ENCODE measurements at regions of chr16 and their contacts with region 1.

Region 1: DNA sequence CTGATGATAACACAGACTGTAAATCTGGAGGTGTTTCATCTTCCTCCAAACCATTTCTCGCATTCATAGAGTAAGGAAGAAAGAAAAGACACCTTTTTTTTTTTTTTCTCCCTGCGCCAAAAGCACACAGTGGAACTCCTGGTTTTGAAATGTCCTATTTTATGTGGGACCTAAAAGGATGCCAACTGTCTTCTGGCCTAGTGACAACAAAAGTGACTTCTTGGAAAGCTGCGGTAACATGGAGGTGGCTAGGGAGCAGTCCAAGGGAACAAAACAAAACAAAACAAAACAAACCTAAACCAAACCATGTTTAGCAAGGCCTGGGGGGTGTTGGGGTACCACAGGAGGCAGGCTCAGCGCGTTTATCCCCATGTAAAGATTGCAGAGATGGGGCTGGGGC is 174.8 kb downstream of the XYLT1 start:
- DNase-seq: no peak
- CTCF ChIP-seq: no peak

Region 2: GRCh38 chr16:17211797-17212196 is 84.2 kb before region 1 on chr16:
- CTCF ChIA-PET with region 1: no interaction called
- POLR2A ChIA-PET with region 1: no interaction called
- DNase-seq: no peak
- CTCF ChIP-seq: peak; percentile 37

Region 3: DNA sequence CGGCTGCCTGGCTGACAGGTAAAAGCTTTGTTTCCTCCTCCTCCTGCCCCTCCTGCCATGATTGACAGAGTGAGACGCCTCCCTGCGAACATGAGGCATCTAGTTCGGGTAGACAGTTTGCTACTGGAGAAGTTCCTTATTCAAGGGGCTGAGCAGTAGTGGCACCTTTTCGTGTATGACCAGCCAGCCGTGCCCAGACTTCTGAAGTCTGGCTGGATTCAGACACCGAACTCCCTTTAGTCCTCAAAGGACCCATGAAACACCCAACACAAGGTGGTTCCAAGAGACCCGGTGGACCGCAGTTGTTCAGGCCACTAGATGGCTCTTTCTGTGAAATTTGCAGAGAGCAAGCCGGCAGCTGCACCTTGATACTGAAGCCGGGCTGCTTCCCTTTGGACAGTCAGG is 18.0 kb before region 1 on chr16:
- CTCF ChIA-PET with region 1: interaction called, 21 read pairs
- POLR2A ChIA-PET with region 1: no interaction called
- DNase-seq: peak; percentile 48
- CTCF ChIP-seq: peak; percentile 73